Activated naive CD4-positive, alpha-beta T cell treated with anti-CD3 and anti-CD28 coated beads for 36 hours (primary cell): ENCODE measurements at regions of chr12 and their contacts with region 1.

Region 1: GRCh38 chr12:53500776-53501614 is at the start of gene TARBP2:
- DNase-seq: peak; percentile 97
- H3K4me3 Mint-ChIP-seq: peak within 1 kb of the TSS; percentile 81
- H3K27ac Mint-ChIP-seq: peak within 1 kb of the TSS; percentile 96
- H3K4me1 Mint-ChIP-seq: peaks cover 41% of the 10 kb centered on the region
- H3K27me3 Mint-ChIP-seq: no peaks in the 10 kb centered on the region
- total RNA-seq, gene TARBP2: 25.0 to 26.8 TPM

Region 2: DNA sequence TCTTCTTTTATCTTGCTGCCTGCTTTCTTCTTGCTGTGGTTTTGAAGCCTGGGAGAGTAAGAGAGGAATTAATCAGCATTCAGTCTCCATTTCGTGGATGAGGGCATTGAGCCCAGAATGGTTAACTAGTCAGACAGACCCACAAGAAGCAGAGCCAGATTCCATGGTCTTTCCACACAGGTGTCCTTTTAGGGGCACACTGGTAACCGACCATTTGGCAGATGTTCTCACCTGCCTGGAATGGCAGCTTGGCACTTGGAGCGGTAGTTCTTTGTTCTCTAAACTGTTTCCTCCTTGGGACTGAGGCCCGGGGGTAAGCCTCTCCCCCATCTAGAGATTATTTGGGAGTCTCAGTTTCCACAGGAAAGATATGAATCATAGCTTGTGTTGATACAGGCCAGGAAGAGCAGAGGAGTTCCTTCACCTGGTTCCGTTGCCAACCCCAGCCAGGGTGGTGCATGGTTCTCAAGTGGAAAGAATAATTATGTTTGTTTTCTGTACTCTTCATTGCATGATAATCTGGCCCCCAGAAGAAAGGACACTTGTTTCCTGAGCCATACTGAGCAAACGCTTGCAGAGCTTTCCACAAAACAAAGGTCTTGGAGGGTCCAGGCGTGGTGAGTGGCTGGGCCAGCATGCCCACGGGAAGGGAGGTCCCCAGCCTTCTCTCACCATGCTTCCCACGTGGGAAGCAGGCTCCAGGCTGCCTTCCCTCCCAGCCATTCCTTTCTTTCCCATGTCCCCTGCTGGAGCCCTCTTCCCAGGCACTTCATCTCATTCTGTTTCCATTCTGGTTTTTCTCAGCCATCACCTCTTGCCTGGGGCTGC is 1064.8 kb before region 1 on chr12:
- CTCF ChIA-PET with region 1: no interaction called
- intact Hi-C with region 1: no loop called
- DNase-seq: no peak
- H3K4me3 Mint-ChIP-seq: no peak overlapping the region
- H3K27ac Mint-ChIP-seq: no peak overlapping the region
- H3K4me1 Mint-ChIP-seq: no peaks in the 10 kb centered on the region
- H3K27me3 Mint-ChIP-seq: peaks cover 6% of the 10 kb centered on the region

Region 3: GRCh38 chr12:53005986-53006809 is 494.8 kb before region 1 on chr12 and contains the start of gene EIF4B:
- CTCF ChIA-PET with region 1: no interaction called
- intact Hi-C with region 1: loop called (anchors 1 kb)
- DNase-seq: peak; percentile 100
- H3K4me3 Mint-ChIP-seq: peak within 1 kb of the TSS; percentile 92
- H3K27ac Mint-ChIP-seq: peak within 1 kb of the TSS; percentile 93
- H3K4me1 Mint-ChIP-seq: peaks cover 47% of the 10 kb centered on the region
- H3K27me3 Mint-ChIP-seq: no peaks in the 10 kb centered on the region
- total RNA-seq, gene EIF4B: 813 to 821 TPM

Region 4: GRCh38 chr12:53205747-53206419 is 295.1 kb before region 1 on chr12:
- CTCF ChIA-PET with region 1: interaction called, 3 read pairs
- intact Hi-C with region 1: loop called (anchors 5 kb)
- DNase-seq: peak; percentile 88
- H3K4me3 Mint-ChIP-seq: peak overlapping the region; percentile 65
- H3K27ac Mint-ChIP-seq: peak overlapping the region; percentile 79
- H3K4me1 Mint-ChIP-seq: peaks cover 75% of the 10 kb centered on the region
- H3K27me3 Mint-ChIP-seq: no peaks in the 10 kb centered on the region

Region 5: GRCh38 chr12:53379389-53380103 is 121.4 kb before region 1 on chr12:
- CTCF ChIA-PET with region 1: interaction called, 3 read pairs
- intact Hi-C with region 1: loop called (anchors 1 kb)
- DNase-seq: peak; percentile 99
- H3K4me3 Mint-ChIP-seq: no peak overlapping the region
- H3K27ac Mint-ChIP-seq: no peak overlapping the region
- H3K4me1 Mint-ChIP-seq: peaks cover 48% of the 10 kb centered on the region
- H3K27me3 Mint-ChIP-seq: no peaks in the 10 kb centered on the region

Region 6: GRCh38 chr12:53441040-53441833 is 59.8 kb before region 1 on chr12 and contains the start of gene PRR13:
- CTCF ChIA-PET with region 1: interaction called, 3 read pairs
- intact Hi-C with region 1: loop called (anchors 1 kb)
- DNase-seq: peak; percentile 100
- H3K4me3 Mint-ChIP-seq: peak within 1 kb of the TSS; percentile 90
- H3K27ac Mint-ChIP-seq: peak within 1 kb of the TSS; percentile 98
- H3K4me1 Mint-ChIP-seq: peaks cover 38% of the 10 kb centered on the region
- H3K27me3 Mint-ChIP-seq: no peaks in the 10 kb centered on the region
- total RNA-seq, gene PRR13: 207 to 216 TPM

Region 7: DNA sequence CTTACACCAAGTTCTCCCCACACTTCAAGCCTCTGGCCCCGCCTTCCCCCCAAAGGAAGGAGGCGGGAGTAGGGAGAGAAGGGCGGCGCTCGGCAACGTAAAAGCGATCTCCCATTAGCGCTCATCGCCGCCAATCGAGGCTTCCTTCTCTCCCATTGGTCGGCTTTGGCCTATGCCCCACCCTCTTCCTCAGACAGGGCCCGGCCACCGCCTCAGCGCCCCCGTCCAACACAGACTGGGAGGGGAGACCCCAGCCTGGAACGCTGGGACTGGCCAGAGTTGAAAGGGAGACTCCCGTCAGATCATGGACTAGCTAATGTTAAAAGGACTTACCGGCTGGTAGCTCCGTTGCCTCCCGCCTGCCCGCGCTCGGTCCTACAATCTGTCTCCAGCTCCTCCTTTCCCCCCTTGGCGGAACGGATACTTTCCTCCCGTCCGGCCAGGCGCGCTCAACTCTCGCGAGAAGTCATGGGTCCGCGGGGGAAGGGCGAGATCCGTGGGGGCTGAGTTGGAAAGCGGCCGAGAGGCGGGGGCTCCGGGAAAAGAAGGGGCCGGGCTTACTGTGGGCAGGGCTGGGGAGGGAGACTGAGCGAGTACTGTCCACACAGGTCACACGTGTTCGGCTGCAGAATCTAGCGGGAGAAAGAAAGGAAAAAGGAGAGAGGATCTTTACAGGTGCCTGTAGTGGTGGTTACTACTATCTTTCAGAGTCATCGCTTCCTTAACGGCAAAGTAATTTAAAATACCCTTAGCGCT is 125.1 kb after region 1 on chr12 and contains the start of gene ATF7:
- CTCF ChIA-PET with region 1: no interaction called
- intact Hi-C with region 1: loop called (anchors 1 kb)
- DNase-seq: peak; percentile 99
- H3K4me3 Mint-ChIP-seq: peak within 1 kb of the TSS; percentile 97
- H3K27ac Mint-ChIP-seq: peak within 1 kb of the TSS; percentile 96
- H3K4me1 Mint-ChIP-seq: peaks cover 44% of the 10 kb centered on the region
- H3K27me3 Mint-ChIP-seq: no peaks in the 10 kb centered on the region
- total RNA-seq, gene ATF7: 19.7 to 19.8 TPM

Region 8: GRCh38 chr12:53727310-53728041 is 226.5 kb after region 1 on chr12 and contains the start of gene CALCOCO1:
- CTCF ChIA-PET with region 1: no interaction called
- intact Hi-C with region 1: loop called (anchors 1 kb)
- DNase-seq: peak; percentile 99
- H3K4me3 Mint-ChIP-seq: peak within 1 kb of the TSS; percentile 92
- H3K27ac Mint-ChIP-seq: peak within 1 kb of the TSS; percentile 87
- H3K4me1 Mint-ChIP-seq: peaks cover 16% of the 10 kb centered on the region
- H3K27me3 Mint-ChIP-seq: no peaks in the 10 kb centered on the region
- total RNA-seq, gene CALCOCO1: 8.1 to 8.3 TPM